ENCODE measurements at regions of chr15 and their contacts with region 1.

Region 1: DNA sequence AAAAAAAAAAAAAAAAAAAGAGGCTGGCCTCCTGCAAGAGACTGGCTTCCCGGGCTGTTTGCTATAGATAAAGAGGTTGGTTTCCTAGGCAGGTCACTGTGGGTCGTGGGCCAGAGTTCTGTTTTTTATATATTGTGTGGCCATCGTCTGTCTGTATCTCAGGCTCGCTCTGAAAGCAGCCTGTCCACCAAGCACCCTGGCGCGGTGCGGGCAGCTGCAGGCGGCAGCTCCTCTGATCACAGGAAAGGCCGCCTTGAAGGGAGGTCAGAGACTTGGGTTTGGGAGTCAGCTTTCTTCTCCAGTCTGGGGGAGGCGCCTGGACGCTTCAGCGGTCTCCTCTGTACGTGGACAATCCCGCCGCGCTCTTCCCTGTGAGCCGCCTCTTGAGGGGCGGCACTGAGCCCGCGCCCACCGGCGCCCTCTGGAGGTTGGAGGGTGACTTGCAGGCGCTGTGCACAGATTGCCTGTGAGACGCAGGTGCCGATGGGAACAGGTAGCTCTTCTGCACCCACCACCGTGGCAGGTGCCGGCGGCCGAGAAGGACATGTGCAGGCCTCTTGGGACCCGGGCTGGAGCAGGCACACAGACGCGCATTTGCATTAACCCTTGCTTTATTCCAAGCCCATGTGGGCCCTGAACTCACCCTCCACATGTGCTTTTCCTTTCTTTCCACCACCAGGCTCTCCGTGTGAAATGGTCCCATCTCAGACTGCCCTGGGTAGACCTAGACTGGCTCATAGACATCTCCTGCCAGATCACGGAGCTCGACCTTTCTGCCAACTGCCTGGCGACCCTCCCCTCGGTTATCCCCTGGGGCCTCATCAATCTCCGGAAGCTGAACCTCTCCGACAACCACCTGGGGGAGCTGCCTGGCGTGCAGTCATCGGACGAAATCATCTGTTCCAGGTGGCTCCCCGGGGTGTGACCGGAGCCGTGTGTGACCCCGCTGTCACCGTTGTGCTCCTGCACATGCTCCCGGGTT is 89.3 kb downstream of the LRRK1 start:
- H3K4me3 ChIP-seq: peak overlapping the region; percentile 57
- H3K27ac ChIP-seq: no peak overlapping the region; the same call in 1 of the 2 replicates
- H3K4me1 ChIP-seq: peaks cover 5% of the 10 kb centered on the region; the same call in 1 of the 2 replicates
- CTCF ChIP-seq: peak; percentile 97

Region 2: DNA sequence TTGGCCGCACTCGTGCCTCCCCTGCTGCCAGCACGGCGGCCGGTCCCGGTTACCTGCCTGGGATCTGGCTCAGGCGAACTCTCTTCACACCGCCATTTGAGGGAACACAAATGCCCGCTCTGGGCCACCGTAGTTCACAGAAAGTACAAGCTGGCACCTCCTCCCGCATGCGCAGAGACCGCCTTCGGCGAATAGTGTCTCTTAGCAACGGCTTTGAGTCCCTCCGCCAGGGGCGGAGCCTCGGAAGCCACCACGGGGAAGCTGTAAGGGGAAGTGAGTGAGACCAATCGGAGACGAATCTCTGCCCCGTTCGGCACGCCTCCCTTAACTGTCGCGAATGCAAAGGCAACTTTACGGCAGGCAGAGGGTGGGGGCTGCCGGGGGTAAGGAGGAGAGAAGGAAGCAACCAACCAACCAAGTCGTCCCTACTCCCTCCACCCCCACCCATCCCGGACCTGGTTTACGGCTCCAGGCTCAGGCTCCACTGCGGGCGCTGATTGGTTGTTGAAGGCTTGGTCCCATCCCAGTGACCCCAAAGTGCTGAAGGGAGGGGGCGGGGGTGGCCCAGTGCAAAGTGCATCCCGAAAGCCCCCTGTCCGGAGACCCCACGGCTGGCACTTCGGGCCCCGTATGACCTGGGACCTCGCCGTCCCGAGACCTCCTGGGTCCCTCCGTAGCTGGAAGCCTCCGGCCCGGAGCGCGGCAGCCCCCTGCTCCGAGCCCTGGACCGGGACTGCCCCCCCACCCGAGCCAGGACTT is 406.2 kb before region 1 on chr15 and contains the starts of genes ASB7 and LINS1:
- CTCF ChIA-PET with region 1: interaction called, 11 read pairs
- POLR2A ChIA-PET with region 1: interaction called, 5 read pairs
- H3K4me3 ChIP-seq: peak within 1 kb of the TSS; percentile 91
- H3K27ac ChIP-seq: peak within 1 kb of the TSS; percentile 62
- H3K4me1 ChIP-seq: peaks cover 14% of the 10 kb centered on the region
- CTCF ChIP-seq: no peak

Region 3: GRCh38 chr15:100635406-100636071 is 372.9 kb before region 1 on chr15:
- CTCF ChIA-PET with region 1: interaction called, 55 read pairs
- POLR2A ChIA-PET with region 1: no interaction called
- H3K4me3 ChIP-seq: no peak overlapping the region
- H3K27ac ChIP-seq: no peak overlapping the region
- H3K4me1 ChIP-seq: no peaks in the 10 kb centered on the region; the same call in 1 of the 2 replicates
- CTCF ChIP-seq: no peak

Region 4: GRCh38 chr15:100918034-100918689 is 90.3 kb before region 1 on chr15:
- CTCF ChIA-PET with region 1: interaction called, 159 read pairs
- POLR2A ChIA-PET with region 1: no interaction called
- H3K4me3 ChIP-seq: no peak overlapping the region
- H3K27ac ChIP-seq: no peak overlapping the region
- H3K4me1 ChIP-seq: no peaks in the 10 kb centered on the region; the same call in 1 of the 2 replicates
- CTCF ChIP-seq: peak; percentile 66

Region 5: GRCh38 chr15:101039461-101039860 is 31.0 kb after region 1 on chr15:
- CTCF ChIA-PET with region 1: interaction called, 19 read pairs
- POLR2A ChIA-PET with region 1: no interaction called
- H3K4me3 ChIP-seq: no peak overlapping the region
- H3K27ac ChIP-seq: no peak overlapping the region
- H3K4me1 ChIP-seq: no peaks in the 10 kb centered on the region
- CTCF ChIP-seq: no peak

Region 6: DNA sequence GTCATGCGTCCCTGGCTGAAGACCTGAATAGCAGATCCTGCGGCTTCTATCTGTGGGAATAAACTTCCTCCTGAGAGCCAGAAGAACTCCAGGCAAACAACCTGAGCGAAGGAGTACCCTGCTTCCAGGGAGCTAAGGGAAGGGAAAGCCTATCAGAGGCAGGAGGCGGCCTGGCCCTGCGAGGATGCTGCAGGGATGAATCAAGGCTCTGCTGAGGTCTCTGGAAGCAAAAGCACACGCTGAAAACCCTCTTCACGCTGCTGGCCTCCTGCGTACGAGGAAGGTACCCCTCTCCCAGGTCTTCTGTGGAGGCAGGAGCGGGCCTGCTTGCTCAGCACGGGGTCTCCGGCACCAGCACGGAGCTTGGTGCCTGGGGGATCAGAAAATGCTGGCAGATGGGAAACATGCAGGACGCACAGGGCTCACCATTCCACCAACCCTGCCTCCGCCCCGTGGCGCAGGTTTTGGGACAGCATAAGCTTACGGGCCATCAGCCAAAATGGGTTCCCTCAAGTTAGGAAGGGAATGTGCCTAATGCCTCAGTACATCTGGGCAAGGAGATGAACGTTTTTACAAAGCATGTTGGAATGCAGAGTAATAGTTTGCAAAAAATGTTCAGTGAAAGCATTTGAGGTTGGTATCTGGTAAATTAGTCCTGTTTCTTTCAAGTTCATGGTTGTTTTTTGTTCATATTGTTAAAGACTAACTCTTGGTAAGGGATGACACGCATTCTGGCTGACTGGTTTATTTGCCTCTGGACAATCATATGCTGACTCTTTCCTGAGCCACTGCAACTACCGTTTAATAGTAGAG is 171.1 kb after region 1 on chr15:
- CTCF ChIA-PET with region 1: no interaction called
- POLR2A ChIA-PET with region 1: no interaction called
- H3K4me3 ChIP-seq: no peak overlapping the region
- H3K27ac ChIP-seq: no peak overlapping the region
- H3K4me1 ChIP-seq: no peaks in the 10 kb centered on the region
- CTCF ChIP-seq: no peak

Region 7: GRCh38 chr15:101258238-101259144 is 250.0 kb after region 1 on chr15:
- CTCF ChIA-PET with region 1: interaction called, 223 read pairs
- POLR2A ChIA-PET with region 1: interaction called, 4 read pairs
- H3K4me3 ChIP-seq: no peak overlapping the region
- H3K27ac ChIP-seq: no peak overlapping the region
- H3K4me1 ChIP-seq: no peaks in the 10 kb centered on the region
- CTCF ChIP-seq: peak; percentile 43; the same call in 1 of the 2 replicates